MCF 10A (cell line): ENCODE measurements at regions of chr5 and their contacts with region 1.

Region 1: DNA sequence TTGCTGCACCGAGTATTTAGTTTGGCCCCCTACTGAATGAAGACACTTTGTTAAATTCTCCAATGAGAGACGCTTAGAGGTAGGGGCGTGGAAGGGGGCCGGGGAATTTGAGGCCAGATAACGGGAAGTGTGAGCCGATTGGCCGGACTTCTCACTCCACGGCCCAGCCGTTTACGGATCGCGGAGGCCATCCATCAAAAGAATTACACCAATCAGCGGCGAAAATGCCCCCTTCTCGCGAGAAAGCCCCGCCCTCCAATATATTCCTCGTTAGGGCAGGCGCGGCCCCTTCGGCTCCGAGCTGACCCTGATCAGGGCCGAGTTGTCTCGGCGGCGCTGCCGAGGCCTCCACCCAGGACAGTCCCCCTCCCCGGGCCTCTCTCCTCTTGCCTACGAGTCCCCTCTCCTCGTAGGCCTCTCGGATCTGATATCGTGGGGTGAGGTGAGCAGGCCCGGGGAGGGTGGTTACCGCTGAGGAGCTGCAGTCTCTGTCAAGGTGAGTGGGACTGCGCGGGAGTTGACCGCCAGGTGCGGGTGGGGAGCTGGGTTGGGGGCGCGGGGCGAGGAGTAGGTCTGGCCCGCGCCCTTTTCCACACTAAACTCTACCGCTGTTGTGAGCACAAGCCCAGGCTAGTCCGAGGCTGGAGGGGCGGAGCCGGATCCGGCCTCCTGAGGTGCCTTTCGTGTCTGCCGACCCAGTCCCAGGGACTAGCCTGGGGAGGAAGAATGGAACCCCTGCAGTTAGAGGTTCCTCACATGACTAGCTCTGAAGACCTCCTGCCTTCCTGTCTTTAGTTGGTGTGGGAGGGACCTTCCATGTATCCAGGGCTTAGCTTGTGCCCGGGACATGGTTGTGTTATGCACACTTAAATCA is at the start of gene CCNG1:
- DNase-seq: peak; percentile 100
- H3K4me3 Mint-ChIP-seq: peak within 1 kb of the TSS; percentile 92
- H3K27ac Mint-ChIP-seq: peak within 1 kb of the TSS; percentile 93
- H3K4me1 Mint-ChIP-seq: peaks cover 32% of the 10 kb centered on the region
- H3K27me3 Mint-ChIP-seq: no peaks in the 10 kb centered on the region
- CTCF ChIP-seq: peak; percentile 10
- total RNA-seq, gene CCNG1: 169 and 196 TPM in 2 replicates

Region 2: DNA sequence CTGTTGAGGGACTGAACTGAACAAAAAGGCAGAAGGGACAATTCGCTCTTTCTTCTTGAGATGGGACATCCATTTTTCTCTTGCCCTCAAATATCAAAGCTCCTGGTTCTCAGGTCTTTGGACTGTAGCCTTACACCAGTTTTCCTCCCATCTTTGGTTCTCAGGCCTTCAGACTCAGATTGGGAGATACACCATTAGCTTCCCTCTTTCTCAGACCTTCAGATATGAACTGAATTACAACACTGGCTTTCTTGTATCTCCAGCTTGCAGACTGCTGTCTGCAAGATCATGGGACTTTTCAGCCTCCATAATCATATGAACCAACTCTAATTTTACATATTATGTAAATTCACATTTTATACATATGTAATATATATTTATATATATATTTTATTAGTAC is 12.7 kb before region 1 on chr5:
- CTCF ChIA-PET with region 1: no interaction called
- POLR2A ChIA-PET with region 1: interaction called, 10 read pairs
- intact Hi-C with region 1: no loop called
- DNase-seq: no peak
- H3K4me3 Mint-ChIP-seq: no peak overlapping the region
- H3K27ac Mint-ChIP-seq: no peak overlapping the region
- H3K4me1 Mint-ChIP-seq: no peaks in the 10 kb centered on the region
- H3K27me3 Mint-ChIP-seq: no peaks in the 10 kb centered on the region
- CTCF ChIP-seq: no peak

Region 3: DNA sequence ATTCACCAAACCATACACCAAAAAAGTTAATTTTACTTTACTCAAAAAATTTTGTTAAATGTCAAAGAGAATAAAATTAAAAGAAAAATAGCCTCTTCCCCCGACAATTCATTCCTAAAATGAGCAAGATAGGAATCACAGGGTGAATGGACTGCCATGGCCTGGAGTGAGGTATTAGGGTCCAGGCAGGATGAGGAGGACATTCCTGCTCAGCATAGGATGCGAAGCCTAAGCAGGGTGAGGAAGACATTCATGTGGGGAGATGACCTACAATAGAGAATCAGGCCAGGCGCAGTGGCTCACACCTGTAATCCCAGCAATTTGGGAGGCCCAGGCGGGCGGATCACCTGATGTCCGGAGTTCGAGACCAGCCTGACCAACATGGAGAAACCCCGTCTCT is 13.9 kb after region 1 on chr5:
- CTCF ChIA-PET with region 1: interaction called, 4 read pairs
- POLR2A ChIA-PET with region 1: interaction called, 392 read pairs
- intact Hi-C with region 1: no loop called
- DNase-seq: no peak
- H3K4me3 Mint-ChIP-seq: no peak overlapping the region
- H3K27ac Mint-ChIP-seq: no peak overlapping the region
- H3K4me1 Mint-ChIP-seq: peaks cover 18% of the 10 kb centered on the region
- H3K27me3 Mint-ChIP-seq: no peaks in the 10 kb centered on the region
- CTCF ChIP-seq: no peak

Region 4: DNA sequence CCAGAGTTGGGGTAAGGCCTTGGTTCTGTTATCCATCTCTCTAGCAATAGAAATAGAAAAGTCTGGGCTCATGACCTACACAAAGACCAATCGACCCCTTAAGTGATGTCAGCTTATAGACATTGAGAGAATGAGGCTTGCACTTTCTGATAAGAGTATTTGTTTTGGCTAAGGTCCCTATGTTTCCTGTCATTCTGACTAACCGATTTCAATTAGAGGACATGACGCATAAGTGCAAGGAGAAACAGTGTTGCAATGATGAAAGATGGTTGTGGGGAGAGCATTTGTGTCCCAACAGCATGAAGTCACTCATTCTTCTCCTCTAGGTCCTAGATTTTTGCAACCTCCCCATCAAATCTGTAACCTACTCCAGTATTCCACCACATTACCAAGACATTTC is 323.0 kb after region 1 on chr5:
- CTCF ChIA-PET with region 1: no interaction called
- POLR2A ChIA-PET with region 1: no interaction called
- intact Hi-C with region 1: no loop called
- DNase-seq: peak; percentile 98
- H3K4me3 Mint-ChIP-seq: no peak overlapping the region
- H3K27ac Mint-ChIP-seq: peak overlapping the region; percentile 62
- H3K4me1 Mint-ChIP-seq: peaks cover 32% of the 10 kb centered on the region
- H3K27me3 Mint-ChIP-seq: no peaks in the 10 kb centered on the region
- CTCF ChIP-seq: no peak